ENCODE measurements at regions of chr2 and their contacts with region 1.

Region 1: GRCh38 chr2:118202707-118203303 is 114.5 kb downstream of the INSIG2 start:
- DNase-seq: peak; percentile 53
- ATAC-seq: peak; percentile 76 to 83
- H3K4me3 ChIP-seq: no peak overlapping the region
- H3K27ac ChIP-seq: no peak overlapping the region
- H3K4me1 ChIP-seq: no peaks in the 10 kb centered on the region
- H3K27me3 ChIP-seq: no peaks in the 10 kb centered on the region
- CTCF ChIP-seq: peak; percentile 76

Region 2: GRCh38 chr2:118530976-118531375 is 328.2 kb after region 1 on chr2:
- intact Hi-C with region 1: no loop called
- DNase-seq: no peak
- ATAC-seq: no peak
- H3K4me3 ChIP-seq: no peak overlapping the region
- H3K27ac ChIP-seq: no peak overlapping the region
- H3K4me1 ChIP-seq: no peaks in the 10 kb centered on the region
- H3K27me3 ChIP-seq: no peaks in the 10 kb centered on the region
- CTCF ChIP-seq: no peak

Region 3: DNA sequence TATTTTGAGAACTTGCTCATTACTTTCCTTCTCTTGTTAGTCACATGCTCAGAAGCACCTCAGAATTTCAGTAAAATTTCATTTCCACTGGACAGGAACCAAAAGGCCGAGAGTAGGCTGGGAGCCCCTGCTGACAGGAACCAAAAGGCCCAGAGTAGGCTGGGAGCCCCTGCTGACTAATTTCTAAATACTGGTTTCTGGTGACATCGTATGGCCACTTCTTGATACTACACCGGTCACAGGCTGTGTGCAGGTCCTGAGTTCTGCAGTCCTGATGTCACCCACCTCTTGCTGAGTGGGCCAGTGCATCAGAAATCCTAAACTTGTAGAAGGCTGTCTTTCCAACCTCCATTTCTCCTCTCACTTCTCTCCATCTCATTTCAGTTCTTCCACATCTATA is 662.3 kb after region 1 on chr2:
- intact Hi-C with region 1: loop called (anchors 10 kb)
- DNase-seq: no peak
- ATAC-seq: peak; percentile 82 to 84
- H3K4me3 ChIP-seq: no peak overlapping the region
- H3K27ac ChIP-seq: no peak overlapping the region
- H3K4me1 ChIP-seq: no peaks in the 10 kb centered on the region
- H3K27me3 ChIP-seq: peaks cover 42% of the 10 kb centered on the region
- CTCF ChIP-seq: peak; percentile 52

Measured in lower lobe of right lung (tissue), 2 donors.